ENCODE measurements at regions of chr7 and their contacts with region 1.

Region 1: GRCh38 chr7:80434047-80434446 is 77.8 kb downstream of the GNAT3 start:
- DNase-seq: no peak
- H3K4me3 ChIP-seq: no peak overlapping the region
- H3K27ac ChIP-seq: no peak overlapping the region
- H3K4me1 ChIP-seq: 0 out of 7 replicates have a peak, but pooled peaks cover 0 to 3% (median 0%) of the 10 kb centered on the region in 4 experiments
- H3K27me3 ChIP-seq: no peaks in the 10 kb centered on the region
- CTCF ChIP-seq: no peak
- EP300 ChIP-seq: no peak
- POLR2A ChIP-seq: no peak
- RAD21 ChIP-seq: no peak

Region 2: GRCh38 chr7:80312139-80312661 is 121.8 kb before region 1 on chr7:
- CTCF ChIA-PET with region 1: no interaction called
- POLR2A ChIA-PET with region 1: no interaction called
- DNase-seq: no peak
- H3K4me3 ChIP-seq: no peak overlapping the region
- H3K27ac ChIP-seq: no peak overlapping the region
- H3K4me1 ChIP-seq: no peaks in the 10 kb centered on the region
- H3K27me3 ChIP-seq: no peaks in the 10 kb centered on the region
- CTCF ChIP-seq: no peak
- EP300 ChIP-seq: no peak
- POLR2A ChIP-seq: no peak
- RAD21 ChIP-seq: no peak

Region 3: GRCh38 chr7:80445351-80445750 is 11.3 kb after region 1 on chr7:
- CTCF ChIA-PET with region 1: interaction called, 10 read pairs
- POLR2A ChIA-PET with region 1: no interaction called
- DNase-seq: no peak
- H3K4me3 ChIP-seq: no peak overlapping the region
- H3K27ac ChIP-seq: no peak overlapping the region
- H3K4me1 ChIP-seq: no peaks in the 10 kb centered on the region
- H3K27me3 ChIP-seq: no peaks in the 10 kb centered on the region
- CTCF ChIP-seq: no peak
- EP300 ChIP-seq: no peak
- POLR2A ChIP-seq: no peak
- RAD21 ChIP-seq: no peak

Measured in H1 (cell line).